GM10248 (cell line): ENCODE measurements at regions of chr13 and their contacts with region 1.

Region 1: DNA sequence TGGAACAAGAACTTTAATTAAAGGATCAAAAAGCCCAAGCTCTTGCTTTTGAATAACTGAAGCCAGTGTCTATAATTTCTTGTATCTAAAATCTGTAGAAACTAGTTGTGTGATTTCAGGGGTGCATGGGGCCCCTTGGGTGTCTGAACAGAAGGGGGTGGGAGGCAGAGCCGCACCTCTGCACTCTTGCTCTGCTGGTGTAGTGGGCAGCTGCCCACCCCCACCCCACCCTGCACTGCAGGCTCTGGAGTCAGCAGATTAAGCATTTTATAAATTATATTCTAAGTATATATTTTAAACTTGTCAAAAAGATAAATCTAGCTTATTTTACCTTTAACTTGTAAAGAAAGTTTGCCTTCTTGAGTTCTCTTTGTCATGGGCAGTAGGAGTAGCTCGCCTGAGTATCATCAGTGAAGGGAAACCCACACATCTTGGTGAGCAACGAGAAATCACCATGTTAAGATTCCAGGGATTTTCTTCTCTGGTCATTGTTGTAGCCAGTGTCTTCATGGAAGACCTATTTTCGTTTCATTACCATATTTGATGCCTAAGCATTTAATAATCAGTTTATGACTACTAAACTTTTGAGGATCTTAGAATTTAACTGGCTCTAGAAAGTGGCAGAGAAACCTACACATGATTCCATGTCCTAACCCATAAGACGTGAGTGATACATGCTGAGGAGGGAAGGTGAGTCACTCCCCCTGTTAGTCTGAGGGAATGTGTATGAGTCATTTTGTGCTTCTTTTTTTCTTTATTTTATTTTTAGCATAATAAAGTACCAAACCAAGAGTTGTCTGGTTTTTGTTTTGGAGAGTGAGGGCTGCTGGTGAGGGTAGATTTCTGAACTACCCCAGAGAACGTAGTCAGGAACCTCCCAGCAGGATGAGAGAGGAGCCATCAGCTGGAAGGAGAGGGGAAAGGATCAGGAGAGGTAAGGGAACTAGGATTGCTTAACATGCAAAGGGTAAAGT is 7.7 kb downstream of the UBE2L5 start:
- DNase-seq: peak; percentile 40
- CTCF ChIP-seq: no peak

Region 2: DNA sequence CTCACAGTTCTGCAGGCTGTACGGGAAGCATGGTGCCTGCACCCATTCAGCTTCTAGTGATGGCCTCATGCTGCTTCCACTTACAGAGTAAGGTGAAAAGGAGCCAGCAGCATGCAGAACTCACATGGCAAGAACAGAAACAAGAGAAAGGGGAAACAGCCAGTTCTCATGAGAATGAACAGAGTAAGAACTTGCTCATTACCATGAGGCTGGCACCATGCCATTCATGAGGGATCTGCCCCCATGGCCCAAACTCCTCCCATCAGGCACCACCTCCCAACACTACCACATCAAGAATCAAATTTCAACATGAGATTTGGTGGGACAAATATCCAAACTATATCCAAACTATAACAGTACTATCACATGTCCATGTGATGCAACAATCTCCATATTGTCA is 194.8 kb before region 1 on chr13:
- CTCF ChIA-PET with region 1: no interaction called
- POLR2A ChIA-PET with region 1: no interaction called
- DNase-seq: no peak
- CTCF ChIP-seq: no peak

Region 3: DNA sequence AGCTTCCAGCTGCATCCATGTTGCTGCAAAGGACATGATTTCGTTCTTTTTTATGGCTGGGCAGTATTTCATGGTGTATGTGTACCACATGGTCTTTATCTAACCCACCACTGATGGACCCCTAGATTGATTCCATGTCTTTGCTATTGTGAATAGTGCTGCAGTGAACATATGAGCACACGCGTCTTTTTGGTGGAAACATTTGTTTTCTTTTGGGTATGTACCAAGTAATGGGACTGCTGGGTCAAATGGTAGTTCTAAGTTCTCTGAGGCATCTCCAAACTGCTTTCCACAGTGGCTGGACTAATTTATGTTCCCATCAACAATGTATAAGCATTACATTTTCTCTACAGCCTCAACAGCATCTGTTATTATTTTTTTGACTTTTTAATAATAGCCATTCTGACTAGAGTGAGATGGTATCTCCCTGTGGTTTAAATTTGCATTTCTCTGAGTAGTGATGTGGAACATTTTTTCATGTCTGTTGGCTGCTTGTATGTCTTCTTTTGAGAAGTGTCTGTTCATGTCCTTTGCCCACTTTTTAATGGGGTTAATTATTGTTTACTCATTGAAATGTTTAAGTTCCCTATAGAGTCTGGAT is 14.5 kb before region 1 on chr13:
- CTCF ChIA-PET with region 1: interaction called, 20 read pairs
- POLR2A ChIA-PET with region 1: no interaction called
- DNase-seq: no peak
- CTCF ChIP-seq: no peak

Region 4: DNA sequence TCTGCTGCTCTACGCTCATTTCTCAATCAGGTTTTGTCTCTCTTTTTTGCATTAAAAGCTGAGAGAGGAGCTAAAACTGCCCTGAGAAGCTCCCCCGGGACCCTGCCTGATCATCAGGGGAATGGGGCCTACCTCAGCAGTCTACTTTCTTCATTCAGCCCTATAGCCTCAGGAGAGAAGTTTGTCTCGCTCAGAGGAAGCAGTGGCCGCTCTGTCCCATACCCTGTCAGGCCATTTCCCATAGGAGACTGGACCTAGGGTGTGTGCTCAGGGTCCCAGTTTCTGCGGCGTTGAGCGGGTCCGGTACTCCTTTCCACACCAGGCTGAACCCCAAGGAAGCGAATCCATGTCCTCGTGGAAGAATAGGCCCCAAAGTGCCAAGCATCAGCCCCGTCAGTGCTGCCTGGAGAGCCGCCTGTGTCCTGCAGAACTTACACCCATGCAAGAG is 14.0 kb after region 1 on chr13:
- CTCF ChIA-PET with region 1: interaction called, 34 read pairs
- POLR2A ChIA-PET with region 1: interaction called, 4 read pairs
- DNase-seq: peak; percentile 57
- CTCF ChIP-seq: no peak

Region 5: GRCh38 chr13:30880856-30881155 is 450.8 kb after region 1 on chr13:
- CTCF ChIA-PET with region 1: no interaction called
- POLR2A ChIA-PET with region 1: no interaction called
- DNase-seq: no peak
- CTCF ChIP-seq: no peak